ENCODE measurements at regions of chr11 and their contacts with region 1.

Region 1: GRCh38 chr11:102780491-102780918 is at the start of gene MMP10:
- DNase-seq: no peak
- H3K4me3 Mint-ChIP-seq: no peak within 1 kb of the TSS
- H3K27ac Mint-ChIP-seq: no peak within 1 kb of the TSS
- H3K4me1 Mint-ChIP-seq: peaks cover 11% of the 10 kb centered on the region
- H3K27me3 Mint-ChIP-seq: peaks cover 9% of the 10 kb centered on the region
- CTCF ChIP-seq: peak; percentile 37
- total RNA-seq, gene MMP10: not detected in 2 replicates

Region 2: DNA sequence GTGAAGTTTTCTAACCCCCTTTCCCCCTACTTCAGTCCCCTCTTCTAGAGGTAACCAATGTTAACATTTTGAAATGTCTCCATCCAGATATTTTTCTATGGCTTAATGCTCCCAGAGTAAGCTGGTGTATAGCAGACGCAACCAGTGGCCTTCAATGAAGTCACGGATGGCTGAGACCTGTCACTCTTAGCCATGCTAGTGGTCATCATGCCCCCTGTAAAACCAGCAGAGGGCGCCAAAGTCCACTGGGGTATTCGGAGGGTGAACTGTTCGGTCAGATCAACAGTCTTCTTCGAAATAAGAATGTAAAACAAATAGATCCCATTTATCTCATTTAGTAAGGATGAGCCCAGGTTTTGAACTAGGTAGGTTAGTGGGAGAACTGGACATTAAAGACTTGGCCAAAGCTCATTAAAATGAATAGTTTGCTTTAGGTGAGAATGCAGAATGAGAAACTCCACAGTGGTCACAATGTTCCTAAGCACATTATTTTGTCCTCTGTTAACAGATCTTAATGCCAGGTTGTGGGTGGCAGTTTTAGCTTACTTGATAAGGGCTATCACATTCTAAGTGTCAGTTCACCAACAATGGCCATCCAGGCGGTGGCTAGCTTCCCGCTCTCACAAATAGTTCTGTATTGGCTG is 47.2 kb before region 1 on chr11:
- CTCF ChIA-PET with region 1: no interaction called
- intact Hi-C with region 1: loop called (anchors 5 kb)
- DNase-seq: peak; percentile 74
- H3K4me3 Mint-ChIP-seq: no peak overlapping the region
- H3K27ac Mint-ChIP-seq: no peak overlapping the region
- H3K4me1 Mint-ChIP-seq: no peaks in the 10 kb centered on the region
- H3K27me3 Mint-ChIP-seq: no peaks in the 10 kb centered on the region
- CTCF ChIP-seq: peak; percentile 64